ENCODE measurements at regions of chr19 and their contacts with region 1.

Region 1: GRCh38 chr19:43519436-43520088 is 7.4 kb downstream of the ETHE1 start:
- DNase-seq: peak; percentile 87
- ATAC-seq: peak; percentile 59
- H3K4me3 ChIP-seq: no peak overlapping the region
- H3K4me3 Mint-ChIP-seq: peak overlapping the region; percentile 57
- H3K27ac ChIP-seq: no peak overlapping the region
- H3K27ac Mint-ChIP-seq: peak overlapping the region; percentile 87
- H3K4me1 ChIP-seq: peaks cover 15 to 23% of the 10 kb centered on the region in 2 donors
- H3K4me1 Mint-ChIP-seq: peaks cover 17% of the 10 kb centered on the region
- H3K27me3 ChIP-seq: no peaks in the 10 kb centered on the region
- H3K27me3 Mint-ChIP-seq: no peaks in the 10 kb centered on the region
- CTCF ChIP-seq: peak; percentile 93

Region 2: DNA sequence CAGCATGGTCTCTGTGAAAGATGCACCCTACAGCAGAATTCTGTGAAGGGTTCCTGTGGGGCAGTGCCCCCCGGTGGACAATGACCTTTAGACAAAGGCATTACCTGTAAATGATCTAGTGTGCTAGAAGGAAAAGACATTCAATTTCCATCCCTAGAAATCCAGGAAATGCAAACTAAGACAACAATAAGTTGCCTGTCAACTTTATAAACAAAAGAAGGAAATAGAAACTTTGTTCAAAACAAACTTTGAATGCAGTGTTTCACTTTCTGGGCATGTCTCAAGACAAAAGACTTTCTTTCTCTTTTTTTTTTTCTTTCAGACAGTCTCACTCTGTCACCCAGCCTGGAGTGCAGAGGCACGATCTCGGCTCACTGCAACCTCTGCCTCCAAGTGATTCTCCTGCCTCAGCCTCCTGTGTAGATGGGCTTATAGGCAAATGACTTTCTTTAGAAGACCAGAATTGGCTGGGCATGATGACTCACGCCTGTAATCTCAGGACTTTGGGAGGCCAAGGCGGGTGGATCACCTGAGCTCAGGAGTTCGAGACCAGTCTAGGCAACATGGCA is 89.3 kb before region 1 on chr19:
- CTCF ChIA-PET with region 1: interaction called, 127 read pairs
- POLR2A ChIA-PET with region 1: no interaction called
- intact Hi-C with region 1: loop called (anchors 1 kb)
- DNase-seq: no peak
- ATAC-seq: peak; percentile 49
- H3K4me3 ChIP-seq: no peak overlapping the region
- H3K4me3 Mint-ChIP-seq: no peak overlapping the region
- H3K27ac ChIP-seq: peak overlapping the region in 1 of 2 donors; percentile 39
- H3K27ac Mint-ChIP-seq: no peak overlapping the region
- H3K4me1 ChIP-seq: peaks cover 8% of the 10 kb centered on the region in 2 donors
- H3K4me1 Mint-ChIP-seq: peaks cover 25% of the 10 kb centered on the region
- H3K27me3 ChIP-seq: peaks cover 0 to 2% (median 0%) of the 10 kb centered on the region in 4 experiments
- H3K27me3 Mint-ChIP-seq: no peaks in the 10 kb centered on the region
- CTCF ChIP-seq: peak; percentile 10

Region 3: DNA sequence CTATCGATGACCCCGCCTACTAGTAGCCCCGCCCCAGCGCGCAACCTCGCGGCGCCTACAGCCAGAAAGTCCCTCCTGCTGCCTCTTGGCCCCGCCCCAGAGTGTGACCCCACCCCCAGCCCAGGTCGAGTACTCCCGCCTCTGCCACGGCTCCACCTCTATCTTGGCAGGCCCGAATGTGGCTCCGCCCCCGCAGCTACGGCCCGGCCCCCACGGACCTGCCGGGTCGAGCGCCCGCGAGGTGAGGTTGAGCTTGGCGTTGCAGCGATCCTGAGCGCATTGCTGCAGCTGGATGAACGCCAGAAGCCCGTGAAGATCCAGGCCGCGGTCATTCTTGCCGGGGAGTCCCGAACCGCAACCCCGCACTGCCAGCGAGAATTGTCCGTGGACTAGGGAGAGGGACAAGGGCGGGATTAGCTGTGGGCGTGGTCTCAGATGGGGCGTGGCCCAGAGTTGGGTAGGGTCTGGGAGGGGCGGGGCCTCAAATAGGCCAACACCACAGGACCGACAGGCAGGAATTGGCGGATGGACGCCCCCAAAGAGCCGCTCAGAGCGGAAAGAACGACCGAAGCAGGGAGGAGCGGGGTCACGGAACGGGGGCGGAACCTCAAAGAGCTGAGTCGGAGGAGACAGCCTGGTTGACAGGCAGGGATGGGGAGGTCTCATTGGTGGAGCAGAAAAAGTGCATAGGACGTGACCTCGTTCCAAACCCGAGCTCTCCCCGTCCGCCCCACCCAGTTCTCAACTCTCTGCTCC is 56.0 kb before region 1 on chr19:
- CTCF ChIA-PET with region 1: interaction called, 644 read pairs
- POLR2A ChIA-PET with region 1: interaction called, 3 read pairs
- intact Hi-C with region 1: loop called (anchors 5 kb)
- DNase-seq: peak; percentile 98
- ATAC-seq: peak; percentile 92
- H3K4me3 ChIP-seq: peak overlapping the region; percentile 13 to 96 (median 77)
- H3K4me3 Mint-ChIP-seq: peak overlapping the region; percentile 97
- H3K27ac ChIP-seq: peak overlapping the region; percentile 30 to 40
- H3K27ac Mint-ChIP-seq: peak overlapping the region; percentile 85
- H3K4me1 ChIP-seq: peaks cover 8 to 14% of the 10 kb centered on the region in 2 donors
- H3K4me1 Mint-ChIP-seq: peaks cover 15% of the 10 kb centered on the region
- H3K27me3 ChIP-seq: peaks cover 0 to 12% (median 5%) of the 10 kb centered on the region in 4 experiments
- H3K27me3 Mint-ChIP-seq: peaks cover 4% of the 10 kb centered on the region
- CTCF ChIP-seq: no peak

Region 4: DNA sequence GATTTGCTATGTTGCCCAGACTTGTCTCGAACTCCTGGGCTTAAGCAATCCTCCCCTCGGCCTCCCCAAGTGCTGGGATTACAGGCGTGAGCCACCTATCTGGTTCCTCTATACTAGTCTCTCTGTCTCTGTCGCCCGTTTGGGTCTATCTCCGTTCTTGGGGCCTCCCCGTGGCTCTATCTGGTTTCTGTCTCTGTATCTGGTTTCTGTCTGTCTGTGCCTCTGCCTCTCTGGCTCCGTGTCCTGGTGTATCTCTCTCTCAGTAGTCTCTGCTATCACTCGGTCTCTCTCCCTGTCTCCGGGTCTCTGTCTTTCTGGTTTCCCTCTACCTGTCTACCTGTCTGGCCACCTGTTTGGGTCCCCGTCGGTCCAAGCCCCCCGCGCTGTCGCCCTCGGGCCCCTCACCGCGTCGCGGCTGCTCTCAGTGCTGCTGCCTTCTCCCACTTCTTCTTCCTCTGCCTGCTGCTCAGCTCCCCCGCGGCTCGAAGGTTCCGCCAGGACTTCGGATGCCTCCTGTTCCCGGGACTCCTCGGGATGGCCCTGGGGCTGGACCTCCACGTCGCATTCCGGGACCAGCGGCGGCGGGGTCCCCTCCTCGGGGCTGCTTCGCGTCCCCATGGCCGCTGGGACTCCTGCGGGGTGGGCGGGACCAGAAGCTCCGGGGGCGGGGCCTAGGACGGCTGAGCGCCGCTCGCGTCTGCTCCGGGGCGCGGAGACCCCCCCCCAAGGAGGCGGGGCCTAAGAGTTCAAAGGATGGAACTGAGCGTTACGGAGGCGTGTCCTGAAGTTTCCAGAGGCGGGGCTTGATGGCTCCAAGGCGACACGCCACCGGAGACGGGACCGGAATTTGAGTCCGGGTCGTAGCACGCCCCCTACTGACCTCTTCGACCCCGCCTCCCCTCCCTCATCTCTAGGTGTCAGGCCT is 15.8 kb before region 1 on chr19:
- CTCF ChIA-PET with region 1: interaction called, 28 read pairs
- POLR2A ChIA-PET with region 1: interaction called, 7 read pairs
- intact Hi-C with region 1: loop called (anchors 1 kb)
- DNase-seq: peak; percentile 97
- ATAC-seq: peak; percentile 95
- H3K4me3 ChIP-seq: peak overlapping the region; percentile 65 to 97 (median 76)
- H3K4me3 Mint-ChIP-seq: peak overlapping the region; percentile 95
- H3K27ac ChIP-seq: peak overlapping the region; percentile 80 to 82
- H3K27ac Mint-ChIP-seq: peak overlapping the region; percentile 98
- H3K4me1 ChIP-seq: peaks cover 12 to 22% of the 10 kb centered on the region in 2 donors
- H3K4me1 Mint-ChIP-seq: peaks cover 23% of the 10 kb centered on the region
- H3K27me3 ChIP-seq: no peaks in the 10 kb centered on the region
- H3K27me3 Mint-ChIP-seq: no peaks in the 10 kb centered on the region
- CTCF ChIP-seq: no peak

Region 5: DNA sequence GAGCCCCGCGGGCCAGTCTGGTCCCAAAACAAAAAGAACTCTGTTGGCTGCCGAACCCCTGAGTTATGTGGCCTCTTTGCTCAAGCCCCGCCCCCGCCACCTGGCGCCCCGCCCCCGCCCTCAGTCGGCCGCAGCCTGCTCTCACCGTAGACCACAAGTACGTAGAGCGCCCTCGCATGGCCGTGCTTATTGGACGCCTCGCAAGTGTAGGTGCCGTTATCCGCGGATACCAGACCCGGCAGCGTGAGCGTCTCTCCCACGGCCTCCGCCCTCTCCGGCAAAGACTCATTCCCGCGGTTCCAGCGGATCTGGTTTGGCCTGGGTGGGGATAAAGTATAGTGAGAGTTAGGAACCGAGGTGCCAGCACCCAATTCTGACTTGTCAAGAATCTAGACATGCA is 105.4 kb after region 1 on chr19:
- CTCF ChIA-PET with region 1: interaction called, 11 read pairs
- POLR2A ChIA-PET with region 1: no interaction called
- intact Hi-C with region 1: no loop called
- DNase-seq: peak; percentile 86
- ATAC-seq: peak; percentile 75
- H3K4me3 ChIP-seq: no peak overlapping the region
- H3K4me3 Mint-ChIP-seq: no peak overlapping the region
- H3K27ac ChIP-seq: no peak overlapping the region
- H3K27ac Mint-ChIP-seq: no peak overlapping the region
- H3K4me1 ChIP-seq: peaks cover 14% of the 10 kb centered on the region in 2 donors
- H3K4me1 Mint-ChIP-seq: peaks cover 19% of the 10 kb centered on the region
- H3K27me3 ChIP-seq: peaks cover 0 to 14% (median 7%) of the 10 kb centered on the region in 4 experiments
- H3K27me3 Mint-ChIP-seq: peaks cover 15% of the 10 kb centered on the region
- CTCF ChIP-seq: peak; percentile 61